AG04449 (cell line): ENCODE measurements at regions of chr5 and their contacts with region 1.

Region 1: DNA sequence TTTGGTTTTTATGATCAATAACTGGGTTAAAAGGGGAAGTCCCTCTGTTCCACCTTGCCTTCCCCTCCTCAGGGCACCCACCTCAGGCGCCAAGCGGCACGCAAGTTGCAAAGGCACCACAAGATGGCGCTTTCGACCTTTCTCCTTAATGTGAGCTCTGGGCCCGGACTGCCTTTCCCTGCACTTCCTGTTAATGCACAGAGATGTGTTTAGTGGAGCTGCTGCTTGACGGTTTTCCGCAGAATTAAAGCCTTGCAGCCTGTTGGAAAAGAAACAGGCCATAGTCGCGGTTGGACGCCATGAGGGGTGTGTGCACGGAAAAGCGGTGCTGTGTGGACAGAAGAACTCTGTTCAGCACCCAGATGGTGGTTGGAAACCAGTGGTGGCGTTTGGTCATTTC is 17.9 kb downstream of the CXCL14 start:
- DNase-seq: peak; percentile 24
- H3K4me3 ChIP-seq: no peak overlapping the region
- CTCF ChIP-seq: peak; percentile 91

Region 2: DNA sequence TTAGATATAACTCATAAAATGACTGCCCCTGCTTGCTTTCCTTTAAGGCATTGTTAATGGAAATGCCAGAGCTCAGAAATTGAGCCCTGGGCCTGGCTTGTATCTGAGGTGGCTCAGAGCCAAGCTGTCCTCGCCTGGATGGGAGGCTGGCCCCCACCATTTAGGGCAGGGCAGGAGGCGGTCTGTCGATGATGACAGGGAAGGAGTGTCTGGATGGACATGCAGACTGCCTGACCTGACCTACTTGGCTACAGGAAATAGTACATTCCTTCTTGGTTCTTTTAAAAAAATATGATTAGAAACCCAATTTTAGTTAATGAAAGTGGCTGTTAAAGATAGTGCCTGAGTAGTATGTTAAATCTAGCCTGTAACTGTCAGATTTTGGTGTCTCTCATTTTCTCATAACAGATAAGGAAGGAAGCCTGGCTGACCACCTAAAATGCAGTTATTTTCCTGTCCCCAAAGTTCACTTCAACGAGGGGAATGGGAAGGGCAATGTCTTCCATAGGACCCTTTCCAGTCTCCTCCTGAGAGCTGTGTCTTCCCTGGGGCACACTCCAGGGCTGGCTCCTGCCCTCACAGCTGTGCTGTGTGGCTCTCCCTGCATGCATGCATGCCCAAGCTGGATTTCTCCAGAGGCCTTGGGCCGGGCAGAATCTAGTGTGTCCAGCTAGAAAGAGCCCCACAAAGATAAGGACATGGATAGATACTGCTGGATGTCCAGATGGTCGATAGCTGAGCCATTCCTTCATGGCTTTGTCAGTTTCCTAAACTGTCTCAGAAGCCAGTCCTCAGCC is 204.1 kb before region 1 on chr5:
- CTCF ChIA-PET with region 1: no interaction called
- POLR2A ChIA-PET with region 1: no interaction called
- DNase-seq: no peak
- H3K4me3 ChIP-seq: no peak overlapping the region
- CTCF ChIP-seq: no peak

Region 3: DNA sequence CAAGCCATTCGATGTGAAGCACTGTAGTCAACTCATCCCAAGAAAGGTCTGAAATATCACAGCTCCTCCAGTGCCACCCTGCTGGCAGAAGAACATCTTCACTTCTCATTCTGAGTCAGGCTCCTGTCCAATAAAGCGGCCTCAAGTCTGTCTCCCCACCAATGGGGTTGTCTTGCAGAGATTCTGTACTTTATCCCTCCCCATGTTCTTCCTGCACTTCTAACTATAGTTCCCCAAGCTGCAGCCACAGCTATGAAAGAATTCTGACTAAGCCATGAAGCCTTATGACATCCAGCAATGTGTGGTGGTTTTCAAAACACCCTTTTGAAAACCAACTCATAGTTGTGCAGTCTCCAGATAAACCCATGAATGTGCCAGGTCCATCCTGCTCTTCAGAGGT is 168.6 kb before region 1 on chr5:
- CTCF ChIA-PET with region 1: no interaction called
- POLR2A ChIA-PET with region 1: no interaction called
- DNase-seq: peak; percentile 82
- H3K4me3 ChIP-seq: no peak overlapping the region
- CTCF ChIP-seq: no peak

Region 4: GRCh38 chr5:135578685-135579341 is 18.0 kb after region 1 on chr5 and contains the start of gene CXCL14:
- CTCF ChIA-PET with region 1: interaction called, 358 read pairs
- POLR2A ChIA-PET with region 1: no interaction called
- DNase-seq: no peak
- H3K4me3 ChIP-seq: peak within 1 kb of the TSS; percentile 50
- CTCF ChIP-seq: no peak

Region 5: DNA sequence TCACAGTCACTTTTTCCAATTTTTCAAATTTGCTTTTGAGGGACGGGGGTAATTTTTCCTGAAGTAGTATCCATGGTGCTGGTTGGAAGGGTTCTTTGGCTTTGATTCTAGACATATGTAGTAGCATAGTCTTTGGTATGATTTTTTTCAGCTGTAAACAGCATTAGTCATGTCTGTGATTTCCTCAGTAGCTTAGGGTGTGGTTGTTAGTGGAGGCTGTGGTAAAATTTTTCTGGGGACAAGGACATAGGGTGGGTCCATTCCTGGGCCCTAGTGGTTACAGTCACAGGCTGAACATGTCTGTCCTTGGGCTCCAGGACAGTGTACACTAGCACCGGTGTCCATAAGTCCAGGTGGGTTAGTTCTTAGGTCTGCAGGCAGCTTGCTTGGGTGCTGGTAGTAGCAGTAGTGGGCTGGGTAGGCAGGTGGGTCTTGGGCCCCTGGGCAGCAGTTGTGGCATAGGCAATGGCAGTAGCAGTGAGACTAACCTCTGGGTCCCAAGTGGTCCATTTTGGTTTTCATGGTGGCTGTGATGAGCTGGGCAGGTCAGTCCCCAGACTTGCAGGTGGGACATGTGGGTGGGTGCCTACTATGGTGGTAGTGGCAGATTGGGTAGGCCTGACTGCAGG is 117.9 kb after region 1 on chr5:
- CTCF ChIA-PET with region 1: no interaction called
- POLR2A ChIA-PET with region 1: no interaction called
- DNase-seq: no peak
- H3K4me3 ChIP-seq: no peak overlapping the region
- CTCF ChIP-seq: no peak

Region 6: GRCh38 chr5:135729321-135729786 is 168.5 kb after region 1 on chr5:
- CTCF ChIA-PET with region 1: interaction called, 39 read pairs
- POLR2A ChIA-PET with region 1: no interaction called
- DNase-seq: no peak
- H3K4me3 ChIP-seq: no peak overlapping the region
- CTCF ChIP-seq: peak; percentile 6

Region 7: DNA sequence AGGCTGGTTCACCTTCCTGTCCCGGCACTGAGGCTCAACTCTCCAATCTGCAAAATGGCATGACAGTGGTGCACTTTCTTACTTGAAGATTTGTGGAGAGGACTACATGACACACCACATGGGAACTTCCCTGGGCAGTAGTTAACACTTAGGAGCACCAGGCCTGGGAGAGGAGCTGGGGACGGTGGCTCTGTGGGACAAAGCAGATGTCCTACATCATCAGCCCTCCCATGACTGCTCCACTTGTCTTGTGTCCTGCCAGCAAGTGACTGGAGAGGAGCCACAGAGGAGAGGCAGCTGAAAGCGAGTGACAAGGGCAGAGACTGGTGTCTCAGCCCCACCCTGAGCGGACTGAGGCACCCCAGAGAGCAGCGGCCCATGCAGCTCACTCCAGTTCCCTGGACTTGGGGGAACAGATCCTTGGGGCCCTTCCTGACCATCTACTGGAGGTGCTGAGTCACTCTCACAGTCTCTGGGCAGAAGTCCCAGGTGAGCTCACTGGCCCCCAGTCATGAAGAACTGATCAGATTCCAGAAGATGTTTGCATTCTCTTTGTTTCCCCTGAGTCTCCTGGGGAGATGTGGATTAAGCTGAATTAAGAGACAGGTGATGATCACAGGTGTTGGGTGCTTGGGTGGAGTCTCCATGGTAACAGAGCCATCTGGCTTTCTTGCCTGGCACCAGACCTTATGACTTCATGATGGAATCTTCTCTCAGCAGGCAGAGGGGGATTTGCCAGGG is 260.4 kb after region 1 on chr5:
- CTCF ChIA-PET with region 1: interaction called, 21 read pairs
- POLR2A ChIA-PET with region 1: no interaction called
- DNase-seq: no peak
- H3K4me3 ChIP-seq: no peak overlapping the region
- CTCF ChIP-seq: no peak

Region 8: DNA sequence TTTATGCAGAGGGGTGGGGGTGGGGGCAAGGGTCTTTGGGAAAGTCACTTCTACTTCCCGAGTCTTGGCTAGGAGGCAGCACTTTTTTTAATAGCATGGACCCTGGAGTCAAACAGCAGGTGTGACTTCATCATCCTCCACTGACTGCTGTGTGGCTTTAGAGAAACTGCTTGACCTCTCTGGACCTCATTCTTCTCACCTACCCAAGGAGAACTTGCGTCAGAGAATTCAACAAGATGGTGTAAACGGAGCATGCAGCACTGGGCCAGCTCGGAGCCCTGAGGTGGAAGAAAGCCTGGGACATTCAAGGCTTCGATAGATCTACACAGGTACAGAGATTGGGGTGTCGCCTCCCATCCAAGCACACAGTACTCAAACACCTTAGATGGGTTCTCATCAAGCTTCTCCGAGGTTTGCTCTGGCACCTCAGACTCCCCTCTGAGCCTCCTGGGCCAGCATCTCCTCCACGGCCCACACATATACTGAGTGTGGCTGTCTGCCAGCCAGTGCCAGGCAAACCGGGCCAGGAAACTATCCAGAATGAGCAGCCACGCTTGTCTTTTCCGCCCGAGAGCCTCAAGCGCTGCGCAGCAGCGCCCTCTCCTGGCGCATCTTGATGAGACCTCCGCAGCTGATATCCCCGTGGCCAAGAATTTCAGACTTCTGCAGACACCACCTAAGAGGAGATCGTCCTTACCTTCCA is 269.0 kb after region 1 on chr5:
- CTCF ChIA-PET with region 1: interaction called, 404 read pairs
- POLR2A ChIA-PET with region 1: no interaction called
- DNase-seq: no peak
- H3K4me3 ChIP-seq: no peak overlapping the region
- CTCF ChIP-seq: peak; percentile 72